H1 (cell line): ENCODE measurements at regions of chr13 and their contacts with region 1.

Region 1: GRCh38 chr13:98454389-98454881 is 122.5 kb downstream of the STK24 start:
- DNase-seq: no peak
- H3K4me3 ChIP-seq: no peak overlapping the region
- H3K27ac ChIP-seq: no peak overlapping the region
- H3K4me1 ChIP-seq: peaks cover 7 to 15% (median 9%) of the 10 kb centered on the region in 4 experiments
- H3K27me3 ChIP-seq: no peaks in the 10 kb centered on the region
- CTCF ChIP-seq: no peak
- EP300 ChIP-seq: no peak
- POLR2A ChIP-seq: no peak
- RAD21 ChIP-seq: no peak

Region 2: GRCh38 chr13:98429977-98430736 is 24.3 kb before region 1 on chr13:
- CTCF ChIA-PET with region 1: interaction called, 10 read pairs
- POLR2A ChIA-PET with region 1: no interaction called
- DNase-seq: no peak
- H3K4me3 ChIP-seq: no peak overlapping the region
- H3K27ac ChIP-seq: no peak overlapping the region
- H3K4me1 ChIP-seq: 0 out of 7 replicates have a peak, but pooled peaks cover 0 to 2% (median 0%) of the 10 kb centered on the region in 4 experiments
- H3K27me3 ChIP-seq: no peaks in the 10 kb centered on the region
- CTCF ChIP-seq: no peak
- EP300 ChIP-seq: no peak
- POLR2A ChIP-seq: no peak
- RAD21 ChIP-seq: no peak

Region 3: DNA sequence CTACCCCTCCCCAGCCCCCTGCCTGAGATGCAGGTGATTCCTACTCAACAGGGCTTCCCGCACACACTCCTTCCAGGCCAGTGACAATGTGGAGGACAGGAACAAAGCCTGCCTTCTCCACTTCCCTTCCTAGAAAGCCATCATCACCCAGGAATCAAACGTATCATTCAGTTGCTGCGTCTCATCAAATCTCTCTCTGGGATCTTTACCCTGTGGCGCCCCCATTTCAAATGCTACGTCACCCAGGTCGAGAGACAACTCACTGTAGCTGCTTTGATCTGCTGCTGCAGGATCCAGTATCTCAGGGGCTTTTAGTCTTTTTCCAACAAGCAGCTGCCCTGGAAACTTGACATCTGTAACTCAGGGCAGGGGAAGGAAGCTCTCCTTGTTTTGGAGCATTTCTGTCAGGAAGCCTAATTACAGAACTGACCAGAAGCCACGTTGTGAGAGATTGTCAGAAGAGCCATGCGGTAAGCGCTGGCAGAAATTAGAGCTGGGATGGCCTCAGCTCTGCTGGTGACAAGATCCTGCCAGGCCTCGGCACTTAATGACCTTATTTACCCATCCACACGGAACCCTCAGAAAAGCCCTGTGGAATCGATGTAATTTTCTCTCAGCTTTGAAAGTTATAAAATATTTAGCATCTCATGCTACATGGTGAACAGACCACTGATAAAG is 18.1 kb before region 1 on chr13:
- CTCF ChIA-PET with region 1: interaction called, 14 read pairs
- POLR2A ChIA-PET with region 1: interaction called, 3 read pairs
- DNase-seq: no peak
- H3K4me3 ChIP-seq: no peak overlapping the region
- H3K27ac ChIP-seq: no peak overlapping the region
- H3K4me1 ChIP-seq: no peaks in the 10 kb centered on the region
- H3K27me3 ChIP-seq: no peaks in the 10 kb centered on the region
- CTCF ChIP-seq: no peak
- EP300 ChIP-seq: no peak
- POLR2A ChIP-seq: no peak
- RAD21 ChIP-seq: peak in 1 of 2 experiments; percentile 1; a peak in 1 of 4 replicates

Region 4: DNA sequence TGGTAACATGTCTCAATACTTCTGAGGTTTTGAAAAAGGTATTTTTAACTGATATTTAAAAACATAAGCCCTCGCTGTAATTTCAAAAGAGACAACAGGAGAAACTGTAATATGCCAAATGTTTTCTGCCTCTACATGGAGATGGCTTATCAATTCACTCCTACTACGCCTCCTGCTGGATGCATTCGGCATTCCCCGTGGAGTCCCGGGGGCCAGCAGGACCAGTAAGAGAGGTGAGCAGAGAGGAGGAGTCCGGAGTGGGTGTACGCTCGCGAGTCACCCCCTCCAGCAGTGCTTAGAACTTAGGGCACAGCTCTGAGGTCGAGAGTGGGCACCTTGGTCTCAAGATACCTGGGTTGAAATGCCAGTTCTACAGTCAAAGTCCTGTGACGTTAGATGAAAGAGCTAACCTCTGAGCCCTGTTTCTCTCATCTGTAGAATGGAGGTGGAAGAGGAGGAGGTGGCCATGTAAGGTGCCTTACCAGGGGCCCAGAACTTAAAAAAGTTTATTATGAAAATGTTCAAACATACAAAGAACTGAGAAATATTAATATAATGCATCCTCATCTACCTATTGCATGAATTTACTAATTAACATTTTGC is 12.3 kb after region 1 on chr13:
- CTCF ChIA-PET with region 1: interaction called, 49 read pairs
- POLR2A ChIA-PET with region 1: interaction called, 5 read pairs
- DNase-seq: peak in 1 of 2 experiments; percentile 94
- H3K4me3 ChIP-seq: no peak overlapping the region
- H3K27ac ChIP-seq: no peak overlapping the region
- H3K4me1 ChIP-seq: peaks cover 0 to 3% (median 1%) of the 10 kb centered on the region in 4 experiments; a peak in 2 of 7 replicates
- H3K27me3 ChIP-seq: no peaks in the 10 kb centered on the region
- CTCF ChIP-seq: peak; percentile 75 to 89 (median 87)
- EP300 ChIP-seq: no peak
- POLR2A ChIP-seq: no peak
- RAD21 ChIP-seq: peak; percentile 65 to 73

Region 5: DNA sequence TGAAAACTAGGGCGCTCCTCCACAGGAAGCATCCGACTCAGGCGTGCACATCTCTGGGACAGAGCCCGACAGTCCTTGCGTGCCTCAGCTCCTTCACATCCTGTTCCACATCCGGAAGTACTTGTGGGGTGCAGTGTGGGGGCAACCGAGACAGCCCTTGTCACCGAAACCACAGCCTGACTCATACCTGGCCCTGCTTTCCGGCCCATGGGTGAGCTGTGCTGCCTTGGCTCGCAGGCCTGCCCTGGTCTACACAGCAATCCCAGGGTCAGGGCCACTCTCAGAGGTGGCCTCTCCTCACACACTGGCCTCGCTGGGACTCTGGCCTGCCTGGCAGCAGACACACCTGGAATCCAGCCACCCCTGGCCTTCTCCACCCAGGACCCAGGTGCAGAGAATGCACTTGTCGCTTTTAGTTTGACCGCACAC is 22.1 kb after region 1 on chr13:
- CTCF ChIA-PET with region 1: interaction called, 11 read pairs
- POLR2A ChIA-PET with region 1: interaction called, 3 read pairs
- DNase-seq: no peak
- H3K4me3 ChIP-seq: peak overlapping the region in 2 of 4 experiments; percentile 6 to 33; a peak in 2 of 8 replicates
- H3K27ac ChIP-seq: no peak overlapping the region
- H3K4me1 ChIP-seq: peaks cover 7 to 40% (median 24%) of the 10 kb centered on the region in 4 experiments
- H3K27me3 ChIP-seq: no peaks in the 10 kb centered on the region
- CTCF ChIP-seq: no peak
- EP300 ChIP-seq: no peak
- POLR2A ChIP-seq: peak in 1 of 2 experiments; percentile 20; a peak in 1 of 3 replicates
- RAD21 ChIP-seq: no peak

Region 6: GRCh38 chr13:98672944-98673545 is 218.6 kb after region 1 on chr13:
- CTCF ChIA-PET with region 1: interaction called, 16 read pairs
- POLR2A ChIA-PET with region 1: interaction called, 3 read pairs
- DNase-seq: peak; percentile 15 to 76
- H3K4me3 ChIP-seq: peak overlapping the region in 3 of 4 experiments; percentile 5 to 34 (median 7); a peak in 2 of 8 replicates
- H3K27ac ChIP-seq: no peak overlapping the region
- H3K4me1 ChIP-seq: peaks cover 0 to 3% (median 1%) of the 10 kb centered on the region in 4 experiments; a peak in 2 of 7 replicates
- H3K27me3 ChIP-seq: no peaks in the 10 kb centered on the region
- CTCF ChIP-seq: peak; percentile 41 to 87 (median 68)
- EP300 ChIP-seq: no peak
- POLR2A ChIP-seq: no peak
- RAD21 ChIP-seq: peak; percentile 78 to 80